CD14-positive monocyte (primary cell): ENCODE measurements at regions of chr20 and their contacts with region 1.

Region 1: GRCh38 chr20:31723319-31724078 is 831 bp upstream of the BCL2L1 start:
- DNase-seq: peak; percentile 93 to 98 (median 97)
- H3K4me3 ChIP-seq: peak overlapping the region; percentile 77 to 98 (median 81)
- H3K4me3 Mint-ChIP-seq: peak overlapping the region; percentile 96
- H3K27ac ChIP-seq: peak overlapping the region; percentile 91 to 99
- H3K27ac Mint-ChIP-seq: peak overlapping the region; percentile 90 to 98 (median 94)
- H3K4me1 ChIP-seq: peaks cover 45 to 59% of the 10 kb centered on the region in 2 donors
- H3K4me1 Mint-ChIP-seq: peaks cover 61% of the 10 kb centered on the region
- H3K27me3 ChIP-seq: no peaks in the 10 kb centered on the region
- H3K27me3 Mint-ChIP-seq: peaks cover 0 to 2% (median 0%) of the 10 kb centered on the region in 3 donors
- CTCF ChIP-seq: peak; percentile 89

Region 2: DNA sequence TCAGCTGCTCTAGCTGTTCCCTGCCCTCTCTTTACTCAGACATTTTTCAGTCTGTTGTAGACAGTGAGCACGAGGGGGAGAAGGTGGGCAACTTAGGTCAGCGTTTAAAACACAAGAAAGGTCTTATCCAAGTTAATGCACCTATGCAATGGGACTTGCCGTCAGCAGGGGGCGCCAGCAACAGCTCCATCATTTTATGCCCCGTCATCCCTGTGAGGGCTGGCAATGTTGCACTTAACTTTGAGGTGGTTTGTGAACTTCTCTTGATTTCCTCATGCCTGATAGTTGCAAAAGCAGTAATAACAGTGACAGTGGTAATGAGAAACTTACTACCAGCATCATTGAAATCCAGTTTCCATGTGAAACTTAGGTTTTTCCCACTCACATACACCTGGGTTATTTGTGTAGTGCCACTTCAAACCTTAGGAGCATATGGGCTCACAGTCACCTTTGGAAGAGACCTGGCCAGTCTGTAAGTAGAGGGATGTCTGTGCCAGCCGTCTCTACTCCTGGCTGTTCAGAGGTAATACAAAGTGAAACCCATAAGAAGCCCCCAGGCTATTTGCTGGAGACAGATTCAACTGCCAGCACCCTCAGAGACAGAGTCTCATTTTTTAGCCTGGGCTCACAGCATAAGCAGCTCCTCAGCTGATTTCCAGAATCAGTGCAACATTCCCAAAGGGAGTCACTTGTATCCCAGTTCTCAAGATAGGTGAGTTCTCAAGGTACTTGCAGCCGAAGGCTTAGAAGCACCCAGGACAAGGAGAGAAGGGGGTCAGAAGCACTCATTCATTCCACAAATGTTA is 163.2 kb before region 1 on chr20:
- intact Hi-C with region 1: loop called in 1 of 2 experiments (anchors 5 kb)
- DNase-seq: peak; percentile 88 to 92 (median 90)
- H3K4me3 ChIP-seq: peak overlapping the region in 1 of 3 experiments; percentile 29
- H3K4me3 Mint-ChIP-seq: peak overlapping the region in 1 of 2 donors; percentile 30
- H3K27ac ChIP-seq: peak overlapping the region; percentile 66 to 91
- H3K27ac Mint-ChIP-seq: peak overlapping the region; percentile 87 to 98 (median 95)
- H3K4me1 ChIP-seq: peaks cover 19 to 27% of the 10 kb centered on the region in 2 donors
- H3K4me1 Mint-ChIP-seq: peaks cover 24% of the 10 kb centered on the region
- H3K27me3 ChIP-seq: no peaks in the 10 kb centered on the region
- H3K27me3 Mint-ChIP-seq: peaks cover 0 to 2% (median 0%) of the 10 kb centered on the region in 3 donors
- CTCF ChIP-seq: peak; percentile 95

Region 3: DNA sequence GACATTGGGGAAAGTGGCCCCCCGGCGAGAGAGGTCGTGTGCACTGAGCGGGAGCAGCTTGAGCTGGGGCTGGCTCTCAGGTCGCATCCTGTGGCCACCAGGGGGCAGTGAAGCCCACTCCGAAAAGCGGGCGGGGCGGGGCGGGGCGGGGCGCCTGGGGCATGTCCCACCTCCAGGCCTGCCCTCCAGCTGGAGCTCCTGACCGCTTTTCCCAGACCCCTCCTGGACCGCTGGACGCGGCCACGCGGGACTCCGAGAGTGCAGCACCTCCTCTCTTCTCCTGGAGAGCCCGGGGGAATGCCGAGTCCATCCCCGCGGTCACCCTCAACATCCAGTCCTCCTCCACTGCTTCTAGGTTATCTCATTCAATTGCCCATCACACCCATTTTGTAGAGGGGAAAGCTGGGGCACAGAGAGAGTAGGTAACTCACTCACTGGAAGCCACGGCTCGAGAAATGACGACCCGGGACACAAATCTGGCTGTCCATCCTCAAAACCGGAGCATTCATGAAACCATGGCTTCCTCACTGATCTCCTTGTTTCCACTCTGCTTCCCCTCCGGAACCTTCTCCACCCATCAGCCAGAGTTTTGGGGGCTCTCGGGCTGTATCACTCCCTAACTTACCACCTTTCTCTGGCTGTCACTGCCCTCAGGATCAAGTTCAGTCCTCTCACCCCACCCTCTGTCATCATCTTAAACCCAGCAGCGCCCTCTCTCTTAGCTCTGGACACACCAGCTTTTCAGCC is 61.7 kb before region 1 on chr20:
- intact Hi-C with region 1: loop called (anchors 2 kb)
- DNase-seq: peak; percentile 57 to 71 (median 62)
- H3K4me3 ChIP-seq: peak overlapping the region; percentile 33 to 81 (median 44)
- H3K4me3 Mint-ChIP-seq: peak overlapping the region; percentile 82 to 91
- H3K27ac ChIP-seq: peak overlapping the region in 1 of 2 donors; percentile 60
- H3K27ac Mint-ChIP-seq: peak overlapping the region; percentile 31 to 79 (median 70)
- H3K4me1 ChIP-seq: peaks cover 10 to 22% of the 10 kb centered on the region in 2 donors
- H3K4me1 Mint-ChIP-seq: peaks cover 21% of the 10 kb centered on the region
- H3K27me3 ChIP-seq: no peaks in the 10 kb centered on the region
- H3K27me3 Mint-ChIP-seq: peaks cover 4 to 7% (median 4%) of the 10 kb centered on the region in 3 donors
- CTCF ChIP-seq: peak; percentile 83

Region 4: GRCh38 chr20:31674895-31675827 is 48.3 kb before region 1 on chr20:
- intact Hi-C with region 1: loop called (anchors 5 kb)
- DNase-seq: peak; percentile 92 to 98 (median 98)
- H3K4me3 ChIP-seq: peak overlapping the region in 2 of 3 experiments; percentile 6 to 46
- H3K4me3 Mint-ChIP-seq: peak overlapping the region; percentile 63 to 88
- H3K27ac ChIP-seq: peak overlapping the region; percentile 70 to 81
- H3K27ac Mint-ChIP-seq: peak overlapping the region; percentile 78 to 96 (median 92)
- H3K4me1 ChIP-seq: peaks cover 25 to 29% of the 10 kb centered on the region in 2 donors
- H3K4me1 Mint-ChIP-seq: peaks cover 40% of the 10 kb centered on the region
- H3K27me3 ChIP-seq: no peaks in the 10 kb centered on the region
- H3K27me3 Mint-ChIP-seq: peaks cover 0 to 11% (median 8%) of the 10 kb centered on the region in 3 donors
- CTCF ChIP-seq: no peak

Region 5: DNA sequence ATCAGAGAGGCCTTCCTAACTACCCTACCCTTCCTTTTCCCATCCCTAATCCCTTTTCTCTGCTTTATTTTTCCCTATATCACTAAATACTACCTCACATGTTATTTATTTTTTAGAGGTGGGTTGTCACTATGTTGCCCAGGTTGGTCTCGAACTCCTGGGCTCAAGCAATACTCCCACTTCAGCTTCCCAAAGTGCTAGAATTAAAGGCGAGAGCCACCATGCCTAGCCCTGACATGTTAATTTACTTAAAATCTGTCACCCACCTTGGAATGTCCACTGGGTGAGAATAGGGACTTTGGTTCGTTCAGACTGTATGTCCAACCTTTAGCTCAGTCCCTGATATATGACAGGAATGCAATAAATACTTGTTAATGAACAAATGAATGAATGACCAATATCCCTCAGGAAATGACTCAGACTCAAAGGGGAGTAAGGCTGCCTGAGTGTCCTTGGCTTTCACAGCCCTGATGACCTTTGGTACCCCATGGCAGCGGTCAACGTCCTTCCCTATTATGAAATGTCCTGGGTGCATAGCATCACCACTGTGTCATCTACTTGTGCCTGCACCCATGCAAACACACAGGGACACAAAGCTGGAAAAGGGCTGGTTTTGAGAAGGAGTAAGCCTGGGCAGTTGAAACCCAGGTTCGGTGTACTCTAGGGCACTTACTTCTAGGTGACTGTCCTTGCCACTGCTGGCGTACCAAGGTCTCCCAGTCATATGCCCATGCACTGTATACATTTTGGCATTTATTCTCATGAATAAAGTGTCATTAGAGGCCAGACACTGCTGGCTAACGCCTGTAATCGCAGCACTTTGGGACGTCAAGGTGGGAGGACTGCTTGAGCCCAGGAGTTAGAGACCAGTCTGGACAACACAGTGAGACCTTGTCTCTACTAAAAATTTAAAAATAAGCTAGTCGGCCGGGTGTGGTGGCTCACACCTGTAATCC is 27.4 kb before region 1 on chr20:
- intact Hi-C with region 1: loop called in 1 of 2 experiments (anchors 2 kb)
- DNase-seq: peak; percentile 19 to 49 (median 30)
- H3K4me3 ChIP-seq: no peak overlapping the region
- H3K4me3 Mint-ChIP-seq: no peak overlapping the region
- H3K27ac ChIP-seq: no peak overlapping the region
- H3K27ac Mint-ChIP-seq: peak overlapping the region in 5 of 7 donors; percentile 20 to 84 (median 74)
- H3K4me1 ChIP-seq: peaks cover 13 to 16% of the 10 kb centered on the region in 2 donors
- H3K4me1 Mint-ChIP-seq: peaks cover 40% of the 10 kb centered on the region
- H3K27me3 ChIP-seq: no peaks in the 10 kb centered on the region
- H3K27me3 Mint-ChIP-seq: peaks cover 0 to 1% (median 0%) of the 10 kb centered on the region in 3 donors
- CTCF ChIP-seq: no peak